Activated T-helper 1 cell treated with anti-CD3 and anti-CD28 coated beads, Interleukin-12 subunit alpha, Interleukin-12 subunit beta, Interleukin-2, Interleukin-4 antibody, amounts not matched to agents 30 ng/mL and 10 ng/mL and 1 ng/mL, durations not matched to agents 14 hours and 24 hours and 36 hours (primary cell): ENCODE measurements at regions of chr16 and their contacts with region 1.

Region 1: GRCh38 chr16:77211880-77212740 is 12.9 kb downstream of the SYCE1L start:
- DNase-seq: peak; percentile 68
- H3K4me3 Mint-ChIP-seq: peak overlapping the region; percentile 81
- H3K27ac Mint-ChIP-seq: peak overlapping the region; percentile 90
- H3K4me1 Mint-ChIP-seq: peaks cover 8% of the 10 kb centered on the region
- H3K27me3 Mint-ChIP-seq: peaks cover 2% of the 10 kb centered on the region

Region 2: GRCh38 chr16:77009453-77009852 is 202.7 kb before region 1 on chr16:
- intact Hi-C with region 1: no loop called
- DNase-seq: no peak
- H3K4me3 Mint-ChIP-seq: no peak overlapping the region
- H3K27ac Mint-ChIP-seq: no peak overlapping the region
- H3K4me1 Mint-ChIP-seq: no peaks in the 10 kb centered on the region
- H3K27me3 Mint-ChIP-seq: no peaks in the 10 kb centered on the region

Region 3: DNA sequence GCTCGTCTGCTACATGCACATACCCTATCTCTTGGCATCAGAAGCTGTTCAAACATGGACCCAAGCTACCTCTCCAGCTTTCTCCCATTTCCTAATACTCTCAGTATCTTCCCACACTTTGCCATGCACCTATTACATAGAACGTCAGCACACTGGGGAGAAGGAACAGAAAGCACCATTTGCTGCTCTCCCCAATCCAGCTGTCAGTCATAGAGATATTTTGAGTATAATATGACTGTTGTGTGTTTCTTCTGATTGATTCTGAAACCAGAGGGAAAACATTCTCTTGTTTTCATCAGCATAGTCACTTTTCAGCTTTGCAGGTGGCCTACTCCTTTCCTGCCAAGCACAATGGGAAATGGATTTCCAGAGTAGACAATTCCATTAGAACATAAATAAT is 115.6 kb after region 1 on chr16:
- intact Hi-C with region 1: no loop called
- DNase-seq: no peak
- H3K4me3 Mint-ChIP-seq: no peak overlapping the region
- H3K27ac Mint-ChIP-seq: no peak overlapping the region
- H3K4me1 Mint-ChIP-seq: peaks cover 35% of the 10 kb centered on the region
- H3K27me3 Mint-ChIP-seq: no peaks in the 10 kb centered on the region

Region 4: GRCh38 chr16:77722309-77723107 is 510.4 kb after region 1 on chr16 and contains the start of gene NUDT7:
- intact Hi-C with region 1: loop called (anchors 5 kb)
- DNase-seq: peak; percentile 91
- H3K4me3 Mint-ChIP-seq: peak within 1 kb of the TSS; percentile 84
- H3K27ac Mint-ChIP-seq: peak within 1 kb of the TSS; percentile 77
- H3K4me1 Mint-ChIP-seq: peaks cover 13% of the 10 kb centered on the region
- H3K27me3 Mint-ChIP-seq: no peaks in the 10 kb centered on the region
- total RNA-seq, gene NUDT7: 4.3 and 5.6 TPM in 2 replicates